ENCODE measurements at regions of chr11 and their contacts with region 1.

Region 1: DNA sequence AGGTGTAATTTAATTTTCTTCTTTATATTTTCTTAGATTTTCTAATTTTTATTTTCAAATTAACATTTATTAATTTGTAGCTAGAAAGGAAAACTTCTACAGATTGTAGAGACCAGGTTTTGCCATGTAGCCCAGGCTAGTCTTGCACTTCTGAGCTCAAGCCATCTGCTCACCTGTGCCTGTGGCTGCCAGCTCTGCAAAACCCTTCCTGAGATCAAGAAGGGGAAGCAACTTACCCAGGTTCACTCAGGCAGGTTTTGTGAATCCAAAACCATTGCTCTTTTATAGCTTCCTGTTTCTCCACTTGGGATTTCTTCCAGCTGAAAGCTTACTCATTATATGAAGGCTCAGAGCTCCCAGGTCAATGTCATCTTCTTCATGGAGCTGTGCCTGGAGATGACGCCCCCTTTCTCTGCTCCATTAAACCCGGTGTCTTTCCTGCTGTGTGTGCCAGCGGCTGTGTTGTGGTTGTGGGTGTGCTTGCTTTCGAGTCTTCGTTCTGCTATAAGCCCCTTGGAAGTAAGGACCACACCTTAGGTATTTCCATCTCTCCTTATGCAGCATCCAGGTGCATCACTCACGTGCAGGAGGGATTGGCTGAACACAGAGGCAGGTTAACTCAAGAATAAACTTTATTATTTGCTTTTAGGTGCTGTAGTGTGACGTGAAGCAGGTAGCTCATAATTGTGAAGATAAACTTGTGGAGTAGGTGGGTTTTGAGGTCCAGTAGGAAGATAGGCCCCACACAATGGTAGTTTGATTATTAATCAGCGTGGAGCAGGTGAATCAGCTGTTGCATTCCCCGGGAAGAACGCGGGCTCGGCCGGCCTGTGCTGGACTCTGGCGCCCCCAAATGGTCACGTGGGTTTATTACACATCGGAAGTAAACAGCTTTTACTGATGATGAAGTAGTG is 42.2 kb upstream of the INCENP start:
- DNase-seq: peak; percentile 74 to 86
- ATAC-seq: peak; percentile 87 to 99 (median 93)
- H3K4me3 ChIP-seq: no peak overlapping the region
- H3K4me3 Mint-ChIP-seq: no peak overlapping the region
- H3K27ac ChIP-seq: no peak overlapping the region
- H3K27ac Mint-ChIP-seq: no peak overlapping the region
- H3K4me1 ChIP-seq: peaks cover 5% of the 10 kb centered on the region
- H3K4me1 Mint-ChIP-seq: peaks cover 7% of the 10 kb centered on the region in 2 donors
- H3K27me3 ChIP-seq: no peaks in the 10 kb centered on the region
- H3K27me3 Mint-ChIP-seq: peaks cover 0 to 6% of the 10 kb centered on the region in 2 donors
- CTCF ChIP-seq: peak; percentile 92

Region 2: DNA sequence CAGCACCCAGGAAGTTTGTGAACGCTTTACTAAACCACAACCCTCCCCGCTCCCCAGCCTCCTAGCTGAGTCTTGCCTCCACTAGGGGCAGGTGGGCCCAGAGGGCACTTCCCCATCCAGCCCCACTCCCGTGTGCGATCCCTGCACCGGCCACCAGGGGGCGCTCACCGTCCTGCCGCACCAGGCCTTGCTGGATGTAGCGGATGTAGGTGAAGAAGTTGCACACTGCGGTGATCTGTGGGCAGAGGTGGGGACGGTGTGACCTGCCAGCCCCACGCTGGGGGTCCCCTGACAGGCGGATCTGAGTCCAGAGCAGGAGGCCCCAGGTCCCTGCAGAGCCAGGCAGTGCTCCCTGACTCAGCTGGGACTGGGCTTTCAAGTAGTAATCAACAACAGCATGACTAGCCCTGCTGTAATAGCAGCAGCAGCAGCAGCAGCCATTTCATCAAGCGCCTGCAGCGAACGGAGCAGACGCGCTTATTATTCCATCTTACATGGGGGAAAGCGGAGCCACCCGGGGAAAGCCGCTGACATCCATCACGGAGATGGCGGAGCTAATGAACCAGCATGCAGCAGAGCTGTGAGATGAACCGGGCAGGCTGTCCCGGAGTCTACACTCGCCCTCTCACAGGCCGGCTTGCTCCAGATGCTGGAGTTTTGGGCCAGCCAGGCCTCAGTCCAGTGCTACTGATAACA is 182.3 kb before region 1 on chr11:
- intact Hi-C with region 1: loop called (anchors 1 kb)
- DNase-seq: peak; percentile 92 to 94
- ATAC-seq: peak; percentile 95 to 96 (median 95)
- H3K4me3 ChIP-seq: no peak overlapping the region
- H3K4me3 Mint-ChIP-seq: peak overlapping the region; percentile 28
- H3K27ac ChIP-seq: no peak overlapping the region
- H3K27ac Mint-ChIP-seq: peak overlapping the region; percentile 50 to 74
- H3K4me1 ChIP-seq: peaks cover 11% of the 10 kb centered on the region
- H3K4me1 Mint-ChIP-seq: peaks cover 0 to 7% of the 10 kb centered on the region in 2 donors
- H3K27me3 ChIP-seq: no peaks in the 10 kb centered on the region
- H3K27me3 Mint-ChIP-seq: peaks cover 0 to 3% of the 10 kb centered on the region in 2 donors
- CTCF ChIP-seq: peak; percentile 99

Region 3: DNA sequence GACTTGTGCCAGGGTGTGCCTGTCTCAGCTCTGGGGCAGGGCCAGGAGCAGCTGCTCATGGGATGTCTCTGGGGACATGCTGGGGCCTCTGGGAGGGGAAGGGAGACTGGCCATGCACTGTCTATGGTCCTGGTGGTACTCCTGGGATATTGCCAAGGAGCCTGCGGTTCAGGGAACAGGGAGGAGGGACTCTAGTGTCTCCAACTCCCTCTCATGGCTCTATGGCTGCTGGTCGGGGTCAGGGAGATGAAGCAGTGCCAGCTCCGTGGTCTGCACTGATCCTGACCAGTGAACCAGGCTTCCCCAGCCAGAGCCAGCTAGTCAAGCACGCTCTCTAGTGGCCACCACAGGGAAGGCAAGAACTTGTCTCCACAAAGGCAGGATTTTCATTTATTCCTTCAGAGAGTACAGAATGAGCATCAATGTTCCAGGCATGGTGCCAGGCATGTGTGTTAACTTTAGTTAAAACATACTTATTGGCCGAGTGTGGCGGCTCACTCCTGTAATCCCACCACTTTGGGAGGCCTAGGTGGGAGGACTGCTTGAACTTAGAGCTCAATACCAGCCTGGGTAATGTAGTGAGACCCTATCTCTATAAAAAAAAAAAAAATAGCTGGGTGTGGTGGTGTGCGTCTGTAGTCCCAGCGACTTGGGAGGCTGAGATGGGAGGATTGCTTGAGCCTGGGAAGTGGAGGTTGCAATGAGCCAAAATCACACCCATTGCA is 134.0 kb before region 1 on chr11:
- intact Hi-C with region 1: loop called (anchors 5 kb)
- DNase-seq: peak; percentile 54 to 82
- ATAC-seq: peak; percentile 86 to 99 (median 93)
- H3K4me3 ChIP-seq: no peak overlapping the region
- H3K4me3 Mint-ChIP-seq: no peak overlapping the region
- H3K27ac ChIP-seq: no peak overlapping the region
- H3K27ac Mint-ChIP-seq: no peak overlapping the region
- H3K4me1 ChIP-seq: peaks cover 2% of the 10 kb centered on the region
- H3K4me1 Mint-ChIP-seq: no peaks in the 10 kb centered on the region
- H3K27me3 ChIP-seq: no peaks in the 10 kb centered on the region
- H3K27me3 Mint-ChIP-seq: no peaks in the 10 kb centered on the region
- CTCF ChIP-seq: peak; percentile 85

Region 4: GRCh38 chr11:61967116-61967923 is 114.3 kb before region 1 on chr11 and contains the start of gene FTH1:
- intact Hi-C with region 1: loop called (anchors 5 kb)
- DNase-seq: peak; percentile 90 to 95
- ATAC-seq: peak; percentile 81 to 88 (median 86)
- H3K4me3 ChIP-seq: peak within 1 kb of the TSS; percentile 76
- H3K4me3 Mint-ChIP-seq: peak within 1 kb of the TSS; percentile 95
- H3K27ac ChIP-seq: peak within 1 kb of the TSS; percentile 91
- H3K27ac Mint-ChIP-seq: peak within 1 kb of the TSS; percentile 91 to 93
- H3K4me1 ChIP-seq: peaks cover 56% of the 10 kb centered on the region
- H3K4me1 Mint-ChIP-seq: peaks cover 50 to 63% of the 10 kb centered on the region in 2 donors
- H3K27me3 ChIP-seq: no peaks in the 10 kb centered on the region
- H3K27me3 Mint-ChIP-seq: no peaks in the 10 kb centered on the region
- CTCF ChIP-seq: no peak
- total RNA-seq, gene FTH1: 1,067 to 1,951 (median 1,796) TPM

Region 5: DNA sequence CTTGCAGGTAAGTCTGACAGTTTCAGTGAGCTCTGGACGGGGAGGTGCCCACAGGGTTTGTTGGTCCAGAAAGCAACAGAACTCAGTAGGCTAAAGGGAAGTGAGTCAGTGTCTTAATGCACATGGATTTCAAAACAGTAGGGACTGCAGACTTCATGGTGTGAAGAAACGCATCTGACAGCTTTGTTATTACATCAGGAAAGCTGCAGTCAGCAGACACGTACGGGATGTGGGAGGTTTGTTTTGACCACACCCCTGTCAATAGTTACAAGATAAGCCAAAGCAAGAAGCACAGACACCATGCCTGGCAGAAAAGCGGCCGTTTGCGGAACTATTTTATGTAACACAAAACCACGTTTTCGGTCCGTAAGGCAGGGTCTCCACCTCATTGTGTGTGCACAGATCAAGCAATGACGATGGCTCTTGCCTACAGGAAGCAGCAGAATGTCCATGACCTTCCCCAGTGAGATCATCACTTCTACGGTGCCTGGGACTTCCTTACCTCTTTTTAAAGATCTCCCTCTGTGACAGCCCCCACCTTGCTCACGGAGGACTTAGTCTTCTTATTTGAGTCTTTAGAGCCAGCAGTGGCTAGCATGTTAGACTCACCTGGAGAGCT is 56.0 kb before region 1 on chr11:
- intact Hi-C with region 1: loop called (anchors 5 kb)
- DNase-seq: peak; percentile 70 to 96
- ATAC-seq: peak; percentile 82 to 93 (median 84)
- H3K4me3 ChIP-seq: no peak overlapping the region
- H3K4me3 Mint-ChIP-seq: peak overlapping the region; percentile 75
- H3K27ac ChIP-seq: peak overlapping the region; percentile 91
- H3K27ac Mint-ChIP-seq: peak overlapping the region; percentile 87 to 93
- H3K4me1 ChIP-seq: peaks cover 16% of the 10 kb centered on the region
- H3K4me1 Mint-ChIP-seq: peaks cover 13 to 16% of the 10 kb centered on the region in 2 donors
- H3K27me3 ChIP-seq: no peaks in the 10 kb centered on the region
- H3K27me3 Mint-ChIP-seq: no peaks in the 10 kb centered on the region
- CTCF ChIP-seq: no peak

Region 6: GRCh38 chr11:62157603-62158002 is 76.0 kb after region 1 on chr11:
- intact Hi-C with region 1: no loop called
- DNase-seq: no peak
- ATAC-seq: no peak
- H3K4me3 ChIP-seq: no peak overlapping the region
- H3K4me3 Mint-ChIP-seq: no peak overlapping the region
- H3K27ac ChIP-seq: no peak overlapping the region
- H3K27ac Mint-ChIP-seq: no peak overlapping the region
- H3K4me1 ChIP-seq: no peaks in the 10 kb centered on the region
- H3K4me1 Mint-ChIP-seq: no peaks in the 10 kb centered on the region
- H3K27me3 ChIP-seq: no peaks in the 10 kb centered on the region
- H3K27me3 Mint-ChIP-seq: peaks cover 10 to 32% of the 10 kb centered on the region in 2 donors
- CTCF ChIP-seq: no peak

Measured in natural killer cell (primary cell).